Mucosa of descending colon (tissue), 3 donors: ENCODE measurements at regions of chr22 and their contacts with region 1.

Region 1: GRCh38 chr22:20916983-20917810 is at the start of gene CRKL:
- DNase-seq: peak; percentile 95 to 98 (median 98)
- ATAC-seq: peak; percentile 95
- H3K4me3 ChIP-seq: peak within 1 kb of the TSS; percentile 69
- H3K4me1 ChIP-seq: peaks cover 14% of the 10 kb centered on the region
- CTCF ChIP-seq: peak; percentile 97
- total RNA-seq, gene CRKL: 48.7 to 63.4 (median 55.3) TPM

Region 2: DNA sequence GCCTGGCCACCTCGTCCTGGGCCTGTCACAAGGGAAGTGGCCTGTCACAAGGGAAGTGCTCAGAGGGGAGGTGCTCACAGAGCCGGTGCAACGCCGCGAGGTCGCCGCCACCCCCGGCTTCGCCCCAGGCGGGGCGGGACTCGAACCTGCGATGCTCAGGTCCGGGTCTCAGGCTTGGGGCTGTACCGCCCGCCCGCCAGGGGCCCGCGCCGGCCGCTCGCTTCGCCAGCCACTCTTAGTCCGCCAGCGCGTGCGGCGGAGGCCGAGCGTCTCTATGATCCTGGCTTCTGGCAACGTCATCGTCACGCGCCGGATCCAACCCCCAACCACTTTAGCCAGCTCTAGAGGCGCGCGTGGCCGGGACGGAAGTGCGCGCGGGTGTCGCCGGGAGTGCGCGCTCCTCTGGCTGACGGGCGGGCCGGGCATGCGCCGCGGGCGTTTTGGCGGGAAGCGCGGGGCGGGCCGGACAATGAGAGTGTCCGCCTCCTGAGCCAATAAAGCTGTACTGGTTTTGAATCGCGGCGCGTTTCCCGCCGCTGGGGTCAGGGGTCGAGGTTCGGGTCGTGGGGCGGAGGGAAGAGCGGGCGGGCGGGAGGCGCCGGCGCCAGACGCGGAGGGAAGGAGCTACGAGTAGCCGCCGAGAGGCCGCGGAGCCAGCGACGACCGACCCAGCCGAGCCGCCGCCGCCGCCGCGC is 800.1 kb before region 1 on chr22 and contains the start of gene TRMT2A:
- intact Hi-C with region 1: no loop called
- DNase-seq: peak; percentile 99
- ATAC-seq: peak; percentile 93
- H3K4me3 ChIP-seq: peak within 1 kb of the TSS; percentile 81
- H3K4me1 ChIP-seq: peaks cover 25% of the 10 kb centered on the region
- CTCF ChIP-seq: no peak
- total RNA-seq, gene TRMT2A: 34.4 to 50.0 (median 37.6) TPM

Region 3: DNA sequence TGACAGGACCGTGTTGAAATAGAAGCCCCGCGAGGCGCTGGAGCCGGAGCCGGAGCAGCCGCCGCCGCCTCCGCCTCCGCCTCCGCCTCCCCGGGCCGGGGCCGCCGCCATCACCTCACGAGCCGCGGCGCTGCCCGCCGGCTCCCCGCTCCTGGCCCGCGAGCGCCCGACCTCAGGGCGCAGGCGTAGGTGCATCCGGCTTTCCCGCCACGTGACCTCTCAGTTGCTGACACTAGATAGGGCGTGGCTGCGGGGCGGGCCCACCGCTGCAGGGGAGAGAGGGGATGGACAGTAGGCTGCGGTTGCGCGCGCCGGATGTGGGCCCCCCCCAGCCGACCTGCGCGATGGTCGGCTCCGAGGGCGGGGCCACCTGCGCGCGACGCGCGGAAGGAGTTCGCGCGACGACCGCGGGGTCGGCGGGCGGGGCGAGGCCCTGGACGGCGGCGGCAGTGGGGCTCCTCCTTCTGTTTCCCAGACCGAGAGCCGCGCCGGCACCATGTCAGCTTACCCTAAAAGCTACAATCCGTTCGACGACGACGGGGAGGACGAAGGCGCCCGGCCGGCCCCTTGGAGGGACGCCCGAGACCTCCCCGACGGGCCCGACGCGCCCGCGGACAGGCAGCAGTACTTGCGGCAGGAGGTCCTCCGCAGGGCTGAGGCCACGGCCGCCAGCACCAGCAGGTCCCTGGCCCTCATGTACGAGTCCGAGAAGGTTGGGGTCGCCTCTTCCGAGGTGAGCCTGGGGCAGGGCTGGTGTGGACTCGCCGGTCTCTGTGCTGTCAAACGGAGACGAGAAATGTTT is 58.4 kb before region 1 on chr22 and contains the starts of genes PI4KA and SNAP29:
- intact Hi-C with region 1: no loop called
- DNase-seq: peak; percentile 98 to 100 (median 99)
- ATAC-seq: peak; percentile 99
- H3K4me3 ChIP-seq: peak within 1 kb of the TSS; percentile 70
- H3K4me1 ChIP-seq: peaks cover 27% of the 10 kb centered on the region
- CTCF ChIP-seq: no peak
- total RNA-seq, gene PI4KA: 77.7 to 130 (median 95.0) TPM
- total RNA-seq, gene SNAP29: 32.2 to 33.8 (median 32.5) TPM

Region 4: DNA sequence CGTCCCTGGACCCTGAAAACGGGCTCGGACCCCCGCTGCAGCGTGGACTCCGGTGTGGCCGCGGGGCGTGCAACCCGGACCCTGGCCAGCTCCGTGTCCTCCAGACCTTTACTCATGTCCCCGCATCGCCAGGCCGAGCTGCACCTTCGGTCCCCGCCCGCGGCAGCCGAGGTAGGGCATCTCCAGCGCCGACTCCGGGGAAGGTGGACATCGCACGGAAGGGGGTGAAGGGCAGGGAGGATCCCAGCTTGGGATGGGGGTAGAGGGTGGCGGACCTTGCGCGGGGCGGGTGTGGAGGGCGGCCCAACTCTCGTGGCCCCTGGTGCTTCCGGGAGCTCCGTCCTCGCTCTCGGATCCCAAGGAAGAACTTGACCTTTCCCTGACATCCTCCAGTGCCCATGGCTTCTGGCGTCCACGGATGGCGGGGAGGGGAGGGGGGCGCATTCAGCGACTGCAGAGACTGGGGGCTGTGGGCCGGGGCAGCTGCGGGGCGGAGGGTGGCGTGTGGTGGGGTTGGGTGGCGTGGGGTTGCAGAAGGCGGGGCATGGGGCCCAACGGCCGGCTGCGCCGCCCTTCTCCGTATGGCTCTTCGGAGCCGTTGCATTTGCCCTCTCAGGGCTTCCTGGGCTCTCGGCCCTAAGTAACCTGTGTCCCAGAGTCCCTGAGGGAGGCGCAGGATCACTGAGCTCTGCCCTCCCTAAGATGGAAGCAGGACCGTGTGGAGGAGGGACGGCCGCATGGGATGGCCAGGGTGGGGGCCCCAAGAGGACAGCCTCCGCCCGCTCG is 40.3 kb after region 1 on chr22:
- intact Hi-C with region 1: loop called in 1 of 2 experiments (anchors 5 kb)
- DNase-seq: peak; percentile 83 to 85 (median 84)
- ATAC-seq: peak; percentile 74
- H3K4me3 ChIP-seq: peak overlapping the region; percentile 67
- H3K4me1 ChIP-seq: peaks cover 47% of the 10 kb centered on the region
- CTCF ChIP-seq: no peak

Region 5: DNA sequence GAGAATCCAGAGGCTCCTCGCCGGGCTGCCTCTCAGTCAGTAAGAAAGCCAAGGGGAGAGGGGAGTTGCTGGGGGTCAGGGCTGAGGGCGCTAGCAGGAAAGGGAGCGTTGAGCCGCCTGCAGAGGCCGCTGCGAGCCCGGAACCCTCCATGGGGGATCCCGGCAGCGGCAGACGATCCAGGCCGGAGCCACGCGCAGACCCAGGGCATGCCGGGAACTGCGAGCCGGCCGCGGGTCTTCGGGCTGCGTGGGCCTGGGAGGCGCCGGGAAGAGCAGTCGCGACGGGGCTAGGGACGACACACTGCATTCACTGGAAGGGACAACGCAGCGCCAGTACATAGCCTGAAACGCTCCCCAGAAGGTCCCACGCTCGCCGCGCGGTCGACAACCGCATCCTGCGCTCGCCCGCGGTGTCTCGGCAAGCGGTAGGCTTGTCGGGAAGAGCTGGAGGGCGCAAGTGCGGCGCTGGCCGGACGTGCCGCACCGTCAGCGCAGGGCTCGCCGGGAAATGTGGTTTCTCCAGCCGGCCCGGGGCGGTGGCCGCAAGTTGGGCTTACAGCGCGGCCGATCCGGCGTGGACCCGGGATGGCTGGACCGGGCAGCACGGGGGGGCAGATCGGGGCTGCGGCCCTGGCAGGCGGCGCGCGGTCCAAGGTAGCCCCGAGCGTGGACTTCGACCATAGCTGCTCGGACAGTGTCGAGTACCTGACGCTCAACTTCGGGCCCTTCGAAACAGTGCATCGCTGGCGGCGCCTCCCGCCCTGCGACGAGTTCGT is 64.8 kb after region 1 on chr22 and contains the start of gene LZTR1:
- intact Hi-C with region 1: loop called in 1 of 2 experiments (anchors 10 kb)
- DNase-seq: peak; percentile 88 to 90 (median 89)
- ATAC-seq: peak; percentile 88
- H3K4me3 ChIP-seq: peak within 1 kb of the TSS; percentile 47
- H3K4me1 ChIP-seq: peaks cover 27% of the 10 kb centered on the region
- CTCF ChIP-seq: no peak
- total RNA-seq, gene LZTR1: 42.9 to 71.3 (median 43.6) TPM